ENCODE measurements at regions of chr1 and their contacts with region 1.

Region 1: DNA sequence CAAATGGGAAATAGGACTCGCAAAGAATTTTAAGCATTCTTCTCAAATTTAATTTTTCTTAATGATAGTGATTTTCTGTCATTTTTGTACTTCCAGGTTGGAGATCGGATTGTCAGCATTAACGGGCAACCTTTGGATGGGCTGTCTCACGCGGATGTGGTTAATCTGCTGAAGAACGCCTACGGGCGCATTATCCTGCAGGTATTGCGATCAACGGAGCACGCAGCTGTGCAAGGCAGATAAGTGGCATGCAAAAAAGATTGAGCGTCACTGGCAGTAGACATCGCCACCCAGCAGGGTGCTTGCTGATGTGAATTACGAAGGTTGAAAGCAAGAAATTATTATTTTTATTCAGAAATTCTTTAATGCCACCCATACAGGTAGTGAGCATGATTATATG is 65.9 kb upstream of the L1TD1 start:
- DNase-seq: no peak
- H3K4me3 ChIP-seq: no peak overlapping the region
- H3K27ac ChIP-seq: no peak overlapping the region
- H3K4me1 ChIP-seq: no peaks in the 10 kb centered on the region
- H3K27me3 ChIP-seq: no peaks in the 10 kb centered on the region
- CTCF ChIP-seq: no peak

Region 2: DNA sequence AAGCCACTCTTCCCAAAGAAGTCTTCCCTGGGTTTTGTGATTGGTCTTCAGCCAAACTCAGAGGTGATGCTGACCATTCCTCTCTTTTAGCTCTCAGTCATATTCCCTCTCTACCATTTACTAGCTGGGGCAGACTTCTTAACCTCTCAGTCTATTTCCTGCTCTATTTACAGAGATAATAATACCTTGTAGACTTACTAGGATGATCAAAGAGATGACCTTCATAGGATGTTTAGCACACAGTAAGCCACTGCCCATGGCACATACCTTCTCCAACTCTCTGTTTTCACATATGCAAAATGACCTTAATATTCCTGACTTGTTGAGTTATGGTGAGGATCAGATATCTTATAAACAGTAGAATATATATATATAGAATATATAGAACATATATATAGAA is 40.3 kb before region 1 on chr1:
- intact Hi-C with region 1: loop called (anchors 5 kb)
- DNase-seq: no peak
- H3K4me3 ChIP-seq: no peak overlapping the region
- H3K27ac ChIP-seq: no peak overlapping the region
- H3K4me1 ChIP-seq: peaks cover 0 to 3% (median 2%) of the 10 kb centered on the region in 3 donors
- H3K27me3 ChIP-seq: no peaks in the 10 kb centered on the region
- CTCF ChIP-seq: no peak